ENCODE measurements at regions of chr15 and their contacts with region 1.

Region 1: GRCh38 chr15:68053701-68054627 is at the start of gene PIAS1:
- DNase-seq: peak; percentile 86
- ATAC-seq: peak; percentile 92
- H3K4me3 ChIP-seq: peak within 1 kb of the TSS; percentile 93
- H3K27ac ChIP-seq: no peak within 1 kb of the TSS
- H3K4me1 ChIP-seq: peaks cover 24% of the 10 kb centered on the region
- H3K27me3 ChIP-seq: no peaks in the 10 kb centered on the region
- CTCF ChIP-seq: no peak
- total RNA-seq, gene PIAS1: 13.8 and 21.9 TPM in 2 replicates

Region 2: GRCh38 chr15:67413770-67414394 is 640.1 kb before region 1 on chr15:
- CTCF ChIA-PET with region 1: interaction called, 10 read pairs
- POLR2A ChIA-PET with region 1: no interaction called
- intact Hi-C with region 1: no loop called
- DNase-seq: peak; percentile 64
- ATAC-seq: peak; percentile 88
- H3K4me3 ChIP-seq: no peak overlapping the region
- H3K27ac ChIP-seq: no peak overlapping the region
- H3K4me1 ChIP-seq: peaks cover 8% of the 10 kb centered on the region; the same call in 1 of the 2 replicates
- H3K27me3 ChIP-seq: no peaks in the 10 kb centered on the region
- CTCF ChIP-seq: no peak

Region 3: GRCh38 chr15:67863442-67863987 is 190.4 kb before region 1 on chr15:
- CTCF ChIA-PET with region 1: interaction called, 3 read pairs
- POLR2A ChIA-PET with region 1: no interaction called
- intact Hi-C with region 1: loop called (anchors 5 kb)
- DNase-seq: peak; percentile 74
- ATAC-seq: peak; percentile 84
- H3K4me3 ChIP-seq: peak overlapping the region; percentile 73
- H3K27ac ChIP-seq: no peak overlapping the region
- H3K4me1 ChIP-seq: peaks cover 18% of the 10 kb centered on the region
- H3K27me3 ChIP-seq: no peaks in the 10 kb centered on the region
- CTCF ChIP-seq: peak; percentile 82

Region 4: DNA sequence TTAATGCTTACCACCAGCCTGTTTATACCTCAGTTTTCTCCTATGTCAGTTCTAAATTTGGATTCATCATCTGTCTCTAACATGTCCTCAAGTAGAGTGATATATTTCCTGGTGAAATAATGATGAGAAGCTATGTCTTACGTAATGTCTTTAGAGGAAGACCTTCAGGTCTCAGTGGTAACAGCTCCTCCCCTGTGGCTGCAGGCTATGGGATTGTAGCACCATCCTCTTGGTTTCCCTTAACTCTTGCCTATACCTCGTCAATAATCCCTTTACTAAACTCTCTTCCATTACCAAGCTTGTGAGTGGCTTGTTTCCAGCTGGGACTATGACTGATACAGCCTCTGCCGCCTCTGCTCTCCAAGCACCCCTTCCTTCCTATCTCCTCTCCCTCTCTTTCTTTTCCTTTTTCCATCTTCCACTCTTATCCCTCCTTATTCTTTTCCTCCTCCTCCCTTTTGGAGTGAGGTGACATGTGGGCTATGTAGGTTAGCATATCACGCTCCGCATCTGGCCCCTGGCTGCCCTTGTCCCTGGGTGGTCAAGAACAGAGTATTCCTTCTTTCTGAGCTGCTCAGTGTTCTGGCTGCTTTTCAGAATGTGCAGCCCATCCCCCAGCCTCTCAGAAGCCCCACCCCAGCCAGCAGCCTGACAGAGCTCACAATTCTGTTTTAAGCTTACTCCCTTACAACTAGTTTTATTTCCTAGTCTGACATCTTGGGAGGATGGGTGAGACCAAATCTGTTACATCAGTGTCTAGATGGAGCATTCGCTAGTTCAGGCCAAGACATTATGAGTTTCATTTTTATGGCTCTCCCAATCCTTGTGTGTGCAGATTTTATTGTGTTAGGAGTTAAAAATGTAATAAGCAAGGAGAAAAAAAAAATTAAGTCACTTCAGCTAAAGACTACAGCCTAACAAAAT is 139.2 kb before region 1 on chr15:
- CTCF ChIA-PET with region 1: no interaction called
- POLR2A ChIA-PET with region 1: no interaction called
- intact Hi-C with region 1: loop called (anchors 2 kb)
- DNase-seq: peak; percentile 4
- ATAC-seq: peak; percentile 41
- H3K4me3 ChIP-seq: peak overlapping the region; percentile 33; the same call in 1 of the 2 replicates
- H3K27ac ChIP-seq: peak overlapping the region; percentile 53
- H3K4me1 ChIP-seq: peaks cover 28% of the 10 kb centered on the region
- H3K27me3 ChIP-seq: no peaks in the 10 kb centered on the region
- CTCF ChIP-seq: no peak

Region 5: DNA sequence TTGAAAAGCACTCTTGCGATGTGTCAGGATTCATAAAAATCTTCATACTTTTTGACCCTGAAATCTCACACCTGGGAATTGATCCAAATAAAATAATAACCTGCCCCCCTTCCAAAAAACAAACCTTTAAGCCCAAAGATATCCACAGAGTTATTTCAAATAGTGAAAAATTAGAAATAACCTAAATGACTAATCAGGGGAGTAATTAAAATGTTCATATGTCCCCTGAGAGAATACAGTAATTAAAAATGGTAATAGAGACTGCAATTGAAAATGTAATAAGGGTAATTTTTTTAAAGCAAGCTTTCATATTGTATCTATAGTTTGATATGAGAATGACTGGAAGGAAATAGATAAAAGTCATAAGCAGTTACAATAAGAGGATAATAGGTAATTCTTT is 83.1 kb after region 1 on chr15:
- CTCF ChIA-PET with region 1: no interaction called
- POLR2A ChIA-PET with region 1: no interaction called
- intact Hi-C with region 1: loop called (anchors 5 kb)
- DNase-seq: no peak
- ATAC-seq: no peak
- H3K4me3 ChIP-seq: no peak overlapping the region
- H3K27ac ChIP-seq: no peak overlapping the region
- H3K4me1 ChIP-seq: peaks cover 19% of the 10 kb centered on the region
- H3K27me3 ChIP-seq: no peaks in the 10 kb centered on the region
- CTCF ChIP-seq: no peak

Measured in PC-3 (cell line).